ENCODE measurements at regions of chr18 and their contacts with region 1.

Region 1: DNA sequence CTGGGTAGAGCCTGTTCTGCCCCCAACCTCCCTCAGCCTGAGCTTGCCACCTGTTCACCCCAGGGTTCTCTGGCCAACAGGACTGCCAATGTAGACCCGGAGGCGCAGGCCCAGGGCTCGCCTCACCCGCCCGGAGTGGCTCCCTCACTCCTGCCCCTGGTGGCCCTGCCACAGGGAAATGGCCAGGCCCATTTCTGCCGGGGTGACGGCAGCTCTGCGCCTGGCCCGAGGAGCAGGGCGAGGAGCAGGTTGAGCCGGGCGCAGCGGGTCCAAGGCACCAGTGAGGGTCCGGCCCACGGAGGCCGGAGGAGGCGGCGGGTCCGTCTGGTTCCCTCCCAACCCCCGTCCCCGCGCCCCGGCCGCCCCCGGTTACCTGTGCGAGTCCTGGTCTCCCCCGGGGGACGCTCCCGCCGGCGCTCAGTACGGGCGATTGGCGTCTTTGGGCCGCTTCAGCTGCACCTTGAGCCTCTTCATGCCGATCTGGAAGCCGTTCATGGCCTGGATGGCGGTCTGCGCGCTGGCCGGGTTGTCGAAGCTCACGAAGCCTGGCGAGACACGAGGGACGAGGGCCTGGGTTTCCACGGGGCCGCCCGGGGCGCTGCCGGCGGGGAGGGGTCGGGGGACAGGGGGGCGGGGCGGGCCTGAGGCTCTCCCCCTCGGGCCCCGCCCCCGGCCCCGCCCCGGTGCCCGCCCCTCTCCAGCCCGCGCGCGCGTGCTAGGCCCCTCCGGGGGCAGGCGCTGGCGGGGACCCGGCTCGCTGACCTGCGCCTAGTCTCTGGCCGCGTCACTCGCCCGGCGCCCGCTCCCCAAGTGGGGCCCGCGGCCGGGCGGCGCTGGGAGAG is 312.0 kb downstream of the CELF4 start:
- DNase-seq: no peak
- H3K4me3 ChIP-seq: peak overlapping the region; percentile 53 to 60
- H3K27ac ChIP-seq: no peak overlapping the region
- H3K4me1 ChIP-seq: peaks cover 0 to 4% of the 10 kb centered on the region in 2 donors
- H3K27me3 ChIP-seq: peaks cover 8% of the 10 kb centered on the region
- CTCF ChIP-seq: no peak

Region 2: GRCh38 chr18:36934884-36935283 is 318.7 kb before region 1 on chr18:
- intact Hi-C with region 1: no loop called
- DNase-seq: no peak
- H3K4me3 ChIP-seq: no peak overlapping the region
- H3K27ac ChIP-seq: no peak overlapping the region
- H3K4me1 ChIP-seq: peaks cover 0 to 3% of the 10 kb centered on the region in 2 donors
- H3K27me3 ChIP-seq: no peaks in the 10 kb centered on the region
- CTCF ChIP-seq: no peak

Region 3: GRCh38 chr18:37314534-37314933 is 60.9 kb after region 1 on chr18:
- intact Hi-C with region 1: loop called (anchors 10 kb)
- DNase-seq: no peak
- H3K4me3 ChIP-seq: no peak overlapping the region
- H3K27ac ChIP-seq: no peak overlapping the region
- H3K4me1 ChIP-seq: no peaks in the 10 kb centered on the region
- H3K27me3 ChIP-seq: no peaks in the 10 kb centered on the region
- CTCF ChIP-seq: no peak

Region 4: GRCh38 chr18:37346048-37346447 is 92.4 kb after region 1 on chr18:
- intact Hi-C with region 1: no loop called
- DNase-seq: no peak
- H3K4me3 ChIP-seq: no peak overlapping the region
- H3K27ac ChIP-seq: no peak overlapping the region
- H3K4me1 ChIP-seq: no peaks in the 10 kb centered on the region
- H3K27me3 ChIP-seq: no peaks in the 10 kb centered on the region
- CTCF ChIP-seq: no peak

Measured in ascending aorta (tissue), 2 donors.